Head of caudate nucleus (tissue), 42 donors: ENCODE measurements at regions of chr16 and their contacts with region 1.

Region 1: DNA sequence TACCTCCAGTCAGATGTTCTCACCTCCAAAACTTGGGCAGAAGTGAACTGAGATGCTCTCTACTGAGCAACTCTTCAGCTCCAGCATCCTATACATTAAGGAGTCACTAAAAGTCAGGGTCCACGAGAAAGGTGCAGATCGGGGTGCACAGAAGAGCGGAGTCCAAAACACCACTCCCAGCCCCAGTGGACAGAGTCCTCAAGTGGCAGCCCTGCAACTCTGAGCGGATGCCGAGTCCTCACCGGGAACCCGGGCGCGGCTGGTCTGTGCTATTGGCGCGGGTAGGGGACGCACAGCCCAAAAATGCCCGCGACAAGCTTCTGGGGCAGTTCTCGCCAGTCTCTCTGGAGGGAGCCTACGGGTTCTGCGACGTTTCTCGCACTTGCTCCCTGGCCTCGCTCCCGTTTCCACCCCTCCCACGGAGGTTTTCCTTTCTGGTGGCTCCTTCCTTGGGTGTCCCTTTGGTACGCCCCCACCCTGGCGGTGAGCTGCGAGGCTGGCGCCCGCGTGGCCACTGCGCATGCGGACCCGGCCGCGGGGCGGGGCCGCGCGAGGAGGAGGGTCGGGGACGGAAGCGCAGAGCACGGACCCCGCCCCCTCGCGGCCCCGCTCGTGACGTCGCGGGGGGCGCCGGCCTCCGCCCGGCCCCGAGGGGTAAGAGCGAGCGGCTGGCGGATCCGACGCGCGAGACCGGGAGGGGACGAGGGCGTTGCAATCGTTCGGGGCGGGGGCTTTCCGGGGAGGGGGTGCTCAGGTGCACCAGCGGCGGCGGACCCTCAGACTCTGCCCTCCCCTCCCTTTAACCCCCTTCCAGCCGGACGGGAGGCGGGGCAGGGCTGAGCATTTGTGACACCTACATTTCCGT is at the start of gene TMEM219:
- DNase-seq: peak; percentile 69 to 96 (median 92)

Region 2: GRCh38 chr16:29720699-29721098 is 241.0 kb before region 1 on chr16:
- intact Hi-C with region 1: no loop called
- DNase-seq: no peak

Region 3: GRCh38 chr16:29973384-29974246 is 11.9 kb after region 1 on chr16 and contains the start of gene TAOK2:
- intact Hi-C with region 1: loop called (anchors 1 kb)
- DNase-seq: peak; percentile 95 to 99 (median 98)

Region 4: GRCh38 chr16:30091474-30092372 is 130.0 kb after region 1 on chr16 and contains the start of gene TBX6:
- intact Hi-C with region 1: no loop called
- DNase-seq: peak; percentile 87 to 98 (median 95)